ENCODE measurements at regions of chr19 and their contacts with region 1.

Region 1: DNA sequence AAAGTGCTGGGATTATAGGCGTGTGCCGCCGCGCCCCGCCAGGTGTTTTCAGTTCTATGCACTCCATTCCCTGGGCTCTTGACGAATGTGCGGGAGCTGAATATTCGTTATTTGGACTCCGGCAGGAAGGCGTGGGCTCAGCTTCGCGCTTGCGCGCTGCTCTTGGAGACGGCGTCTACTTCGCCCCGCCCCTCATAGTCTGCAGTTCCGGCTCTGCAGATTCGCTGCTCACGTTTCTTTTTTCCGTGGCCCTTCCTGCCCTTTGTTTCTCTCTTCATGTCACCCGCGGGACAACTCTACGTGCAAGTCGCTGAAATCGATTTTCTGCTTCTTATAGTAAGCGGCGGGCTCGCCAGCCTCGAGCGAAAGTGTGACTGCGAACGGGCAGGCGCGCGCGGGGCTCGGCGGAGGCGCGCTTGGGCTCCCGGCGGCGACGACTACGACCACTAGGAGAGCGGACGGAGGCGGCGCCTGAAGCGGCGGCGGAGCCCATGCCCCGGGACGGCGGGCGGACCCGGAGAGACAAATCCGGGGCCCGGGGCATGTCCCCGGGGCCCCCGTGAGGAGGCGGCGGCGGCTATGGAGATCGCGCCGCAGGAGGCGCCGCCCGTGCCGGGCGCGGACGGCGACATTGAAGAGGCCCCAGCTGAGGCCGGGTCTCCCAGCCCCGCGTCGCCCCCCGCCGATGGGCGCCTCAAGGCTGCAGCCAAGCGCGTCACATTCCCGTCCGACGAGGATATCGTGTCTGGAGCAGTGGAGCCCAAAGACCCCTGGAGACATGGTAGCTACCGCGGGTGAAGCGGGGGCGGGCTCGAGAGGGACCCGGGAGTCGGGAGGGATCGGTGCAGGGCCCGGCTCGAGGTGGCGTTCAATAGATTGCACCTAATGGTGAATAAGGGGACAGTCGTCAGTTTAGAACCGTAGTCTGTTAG is at the start of gene PPP1R37:
- DNase-seq: peak; percentile 83 to 98 (median 90)
- ATAC-seq: peak; percentile 72
- H3K4me3 ChIP-seq: peak within 1 kb of the TSS; percentile 97
- H3K4me3 Mint-ChIP-seq: peak within 1 kb of the TSS; percentile 93
- H3K27ac ChIP-seq: peak within 1 kb of the TSS; percentile 64 to 91
- H3K27ac Mint-ChIP-seq: peak within 1 kb of the TSS; percentile 97
- H3K4me1 ChIP-seq: peaks cover 88% of the 10 kb centered on the region
- H3K4me1 Mint-ChIP-seq: peaks cover 66% of the 10 kb centered on the region
- H3K27me3 ChIP-seq: no peaks in the 10 kb centered on the region
- H3K27me3 Mint-ChIP-seq: no peaks in the 10 kb centered on the region
- CTCF ChIP-seq: peak; percentile 27
- total RNA-seq, gene PPP1R37: 17.2 to 19.6 TPM

Region 2: DNA sequence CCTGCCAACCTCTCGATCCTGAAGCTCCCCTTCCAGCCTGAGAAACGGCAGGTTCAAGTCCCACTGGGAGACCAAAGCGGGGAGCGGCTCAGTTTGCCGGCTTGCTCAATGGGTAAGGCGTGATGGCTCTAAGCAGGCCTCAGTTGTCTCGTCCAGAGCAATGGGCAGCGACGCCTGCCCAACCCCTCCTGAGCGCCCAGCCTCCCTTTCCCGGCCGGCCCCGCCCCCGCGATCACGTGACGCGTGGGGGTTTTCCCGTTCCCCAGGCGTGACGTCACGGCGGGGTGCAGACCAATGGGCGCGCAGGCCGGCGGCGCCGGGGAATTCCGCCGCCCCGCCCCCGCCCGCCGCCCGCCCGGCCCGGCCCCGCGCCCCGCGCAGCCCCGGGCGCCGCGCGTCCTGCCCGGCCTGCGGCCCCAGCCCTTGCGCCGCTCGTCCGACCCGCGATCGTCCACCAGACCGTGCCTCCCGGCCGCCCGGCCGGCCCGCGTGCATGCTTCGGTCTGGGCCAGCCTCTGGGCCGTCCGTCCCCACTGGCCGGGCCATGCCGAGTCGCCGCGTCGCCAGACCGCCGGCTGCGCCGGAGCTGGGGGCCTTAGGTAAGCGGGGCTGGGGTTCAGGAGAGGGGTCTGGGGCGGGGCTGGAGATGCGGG is 91.8 kb before region 1 on chr19 and contains the start of gene RELB:
- CTCF ChIA-PET with region 1: no interaction called
- POLR2A ChIA-PET with region 1: interaction called, 14 read pairs
- intact Hi-C with region 1: loop called in 1 of 2 experiments (anchors 1 kb)
- DNase-seq: peak; percentile 90 to 98 (median 94)
- ATAC-seq: peak; percentile 55
- H3K4me3 ChIP-seq: peak within 1 kb of the TSS; percentile 58
- H3K4me3 Mint-ChIP-seq: peak within 1 kb of the TSS; percentile 100
- H3K27ac ChIP-seq: peak within 1 kb of the TSS; percentile 98 to 100
- H3K27ac Mint-ChIP-seq: peak within 1 kb of the TSS; percentile 100
- H3K4me1 ChIP-seq: peaks cover 18% of the 10 kb centered on the region
- H3K4me1 Mint-ChIP-seq: peaks cover 10% of the 10 kb centered on the region
- H3K27me3 ChIP-seq: no peaks in the 10 kb centered on the region
- H3K27me3 Mint-ChIP-seq: no peaks in the 10 kb centered on the region
- CTCF ChIP-seq: no peak
- total RNA-seq, gene RELB: 91.6 to 92.5 TPM

Region 3: GRCh38 chr19:45079063-45079910 is 13.7 kb before region 1 on chr19 and contains the start of gene GEMIN7:
- CTCF ChIA-PET with region 1: interaction called, 15 read pairs
- POLR2A ChIA-PET with region 1: interaction called, 49 read pairs
- intact Hi-C with region 1: loop called in 1 of 2 experiments (anchors 2 kb)
- DNase-seq: peak; percentile 61 to 89 (median 73)
- ATAC-seq: peak; percentile 72
- H3K4me3 ChIP-seq: peak within 1 kb of the TSS; percentile 93
- H3K4me3 Mint-ChIP-seq: peak within 1 kb of the TSS; percentile 93
- H3K27ac ChIP-seq: peak within 1 kb of the TSS; percentile 41 to 75
- H3K27ac Mint-ChIP-seq: peak within 1 kb of the TSS; percentile 79
- H3K4me1 ChIP-seq: peaks cover 62% of the 10 kb centered on the region
- H3K4me1 Mint-ChIP-seq: peaks cover 45% of the 10 kb centered on the region
- H3K27me3 ChIP-seq: no peaks in the 10 kb centered on the region
- H3K27me3 Mint-ChIP-seq: no peaks in the 10 kb centered on the region
- CTCF ChIP-seq: no peak
- total RNA-seq, gene GEMIN7: 4.0 to 4.8 TPM

Region 4: DNA sequence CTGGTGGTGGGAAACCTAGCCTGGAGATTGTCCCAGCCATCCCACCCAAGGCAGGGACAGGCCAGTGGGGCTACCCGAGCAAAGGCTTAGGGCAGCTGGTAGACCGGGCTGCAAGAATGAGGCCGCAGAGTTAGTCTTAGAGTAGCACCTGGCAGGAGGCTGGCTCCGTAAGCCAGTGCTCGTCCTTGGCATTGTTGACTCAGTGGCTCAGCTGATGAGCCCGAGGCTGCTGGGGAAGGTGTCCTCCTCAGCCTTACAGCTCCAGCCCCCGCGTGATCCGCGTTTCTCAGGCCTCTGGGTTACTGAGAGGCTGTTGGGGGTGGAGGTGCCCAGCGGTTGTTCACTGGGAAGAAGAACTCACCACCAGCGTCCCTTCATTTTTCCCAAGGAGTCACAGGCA is 24.7 kb after region 1 on chr19:
- CTCF ChIA-PET with region 1: no interaction called
- POLR2A ChIA-PET with region 1: interaction called, 13 read pairs
- intact Hi-C with region 1: no loop called
- DNase-seq: no peak
- ATAC-seq: peak; percentile 9
- H3K4me3 ChIP-seq: no peak overlapping the region
- H3K4me3 Mint-ChIP-seq: peak overlapping the region; percentile 2
- H3K27ac ChIP-seq: no peak overlapping the region
- H3K27ac Mint-ChIP-seq: peak overlapping the region; percentile 64
- H3K4me1 ChIP-seq: peaks cover 66% of the 10 kb centered on the region
- H3K4me1 Mint-ChIP-seq: peaks cover 65% of the 10 kb centered on the region
- H3K27me3 ChIP-seq: no peaks in the 10 kb centered on the region
- H3K27me3 Mint-ChIP-seq: no peaks in the 10 kb centered on the region
- CTCF ChIP-seq: no peak

Region 5: GRCh38 chr19:45152504-45153338 is 59.7 kb after region 1 on chr19:
- CTCF ChIA-PET with region 1: no interaction called
- POLR2A ChIA-PET with region 1: interaction called, 26 read pairs
- intact Hi-C with region 1: no loop called
- DNase-seq: peak; percentile 19 to 77 (median 34)
- ATAC-seq: peak; percentile 70
- H3K4me3 ChIP-seq: peak overlapping the region; percentile 50
- H3K4me3 Mint-ChIP-seq: peak overlapping the region; percentile 76
- H3K27ac ChIP-seq: no peak overlapping the region
- H3K27ac Mint-ChIP-seq: peak overlapping the region; percentile 65
- H3K4me1 ChIP-seq: peaks cover 38% of the 10 kb centered on the region
- H3K4me1 Mint-ChIP-seq: peaks cover 21% of the 10 kb centered on the region
- H3K27me3 ChIP-seq: peaks cover 0 to 6% of the 10 kb centered on the region in 2 experiments
- H3K27me3 Mint-ChIP-seq: peaks cover 28% of the 10 kb centered on the region
- CTCF ChIP-seq: no peak

Region 6: DNA sequence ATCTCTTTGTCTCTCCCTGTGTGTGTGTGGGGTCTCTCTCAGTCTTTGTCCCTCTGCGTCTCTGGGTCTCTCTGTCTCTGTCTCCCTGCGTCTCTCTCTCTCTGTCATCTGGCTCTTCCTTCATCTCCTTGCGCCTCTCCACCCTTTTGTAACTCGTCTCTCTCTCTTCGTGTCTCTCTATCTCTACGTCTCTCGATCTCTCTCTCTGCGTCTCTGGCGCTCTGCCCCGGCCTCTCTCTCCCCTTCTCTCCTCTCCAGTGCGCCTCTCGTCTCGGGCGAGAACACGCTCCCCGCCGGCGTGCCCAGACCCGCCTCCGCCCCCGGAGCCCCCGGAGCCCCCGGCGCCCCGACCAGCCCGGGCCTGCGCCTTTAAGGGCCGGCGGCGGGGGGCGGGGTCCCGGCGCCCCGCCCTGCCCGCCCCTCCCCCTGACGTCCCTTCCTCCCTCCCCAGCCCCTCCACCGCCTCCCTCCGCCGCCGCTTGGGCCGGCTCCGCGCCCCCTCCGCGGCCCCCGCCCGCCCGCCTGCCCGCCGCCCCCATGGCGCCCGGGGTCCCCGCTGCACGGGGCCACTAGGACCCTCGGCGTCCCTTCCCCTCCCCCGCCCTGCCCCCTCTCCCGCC is 157.9 kb after region 1 on chr19 and contains the start of gene MARK4:
- CTCF ChIA-PET with region 1: no interaction called
- POLR2A ChIA-PET with region 1: no interaction called
- intact Hi-C with region 1: loop called in 1 of 2 experiments (anchors 5 kb)
- DNase-seq: peak; percentile 32 to 84 (median 52)
- ATAC-seq: peak; percentile 71
- H3K4me3 ChIP-seq: peak within 1 kb of the TSS; percentile 83
- H3K4me3 Mint-ChIP-seq: peak within 1 kb of the TSS; percentile 90
- H3K27ac ChIP-seq: no peak within 1 kb of the TSS
- H3K27ac Mint-ChIP-seq: peak within 1 kb of the TSS; percentile 72
- H3K4me1 ChIP-seq: peaks cover 56% of the 10 kb centered on the region
- H3K4me1 Mint-ChIP-seq: peaks cover 35% of the 10 kb centered on the region
- H3K27me3 ChIP-seq: no peaks in the 10 kb centered on the region
- H3K27me3 Mint-ChIP-seq: no peaks in the 10 kb centered on the region
- CTCF ChIP-seq: no peak
- total RNA-seq, gene MARK4: 18.1 to 19.8 TPM